Activated T-helper 2 cell treated with anti-CD3 and anti-CD28 coated beads, Interferon-gamma antibody, Interleukin-2, Interleukin-4, amounts not matched to agents 10 μg/mL and 5 μg/mL and 100 μg/mL, durations not matched to agents 14 hours and 24 hours and 36 hours (primary cell): ENCODE measurements at regions of chr5 and their contacts with region 1.

Region 1: GRCh38 chr5:73419465-73420390 is 28.8 kb downstream of the FOXD1 start:
- DNase-seq: no peak
- H3K4me3 Mint-ChIP-seq: no peak overlapping the region
- H3K27ac Mint-ChIP-seq: no peak overlapping the region
- H3K4me1 Mint-ChIP-seq: peaks cover 2% of the 10 kb centered on the region
- H3K27me3 Mint-ChIP-seq: peaks cover 77% of the 10 kb centered on the region

Region 2: GRCh38 chr5:73437101-73437776 is 17.5 kb after region 1 on chr5:
- intact Hi-C with region 1: loop called (anchors 2 kb)
- DNase-seq: no peak
- H3K4me3 Mint-ChIP-seq: no peak overlapping the region
- H3K27ac Mint-ChIP-seq: no peak overlapping the region
- H3K4me1 Mint-ChIP-seq: peaks cover 3% of the 10 kb centered on the region
- H3K27me3 Mint-ChIP-seq: peaks cover 80% of the 10 kb centered on the region